Ascending aorta (tissue), 2 donors: ENCODE measurements at regions of chr18 and their contacts with region 1.

Region 1: GRCh38 chr18:32092422-32093101 is 888 bp downstream of the RNF138 start:
- DNase-seq: peak; percentile 92 to 99
- H3K4me3 ChIP-seq: peak overlapping the region; percentile 89 to 96
- H3K27ac ChIP-seq: peak overlapping the region; percentile 99 to 100
- H3K4me1 ChIP-seq: peaks cover 0 to 12% of the 10 kb centered on the region in 2 donors
- H3K27me3 ChIP-seq: no peaks in the 10 kb centered on the region
- CTCF ChIP-seq: no peak

Region 2: DNA sequence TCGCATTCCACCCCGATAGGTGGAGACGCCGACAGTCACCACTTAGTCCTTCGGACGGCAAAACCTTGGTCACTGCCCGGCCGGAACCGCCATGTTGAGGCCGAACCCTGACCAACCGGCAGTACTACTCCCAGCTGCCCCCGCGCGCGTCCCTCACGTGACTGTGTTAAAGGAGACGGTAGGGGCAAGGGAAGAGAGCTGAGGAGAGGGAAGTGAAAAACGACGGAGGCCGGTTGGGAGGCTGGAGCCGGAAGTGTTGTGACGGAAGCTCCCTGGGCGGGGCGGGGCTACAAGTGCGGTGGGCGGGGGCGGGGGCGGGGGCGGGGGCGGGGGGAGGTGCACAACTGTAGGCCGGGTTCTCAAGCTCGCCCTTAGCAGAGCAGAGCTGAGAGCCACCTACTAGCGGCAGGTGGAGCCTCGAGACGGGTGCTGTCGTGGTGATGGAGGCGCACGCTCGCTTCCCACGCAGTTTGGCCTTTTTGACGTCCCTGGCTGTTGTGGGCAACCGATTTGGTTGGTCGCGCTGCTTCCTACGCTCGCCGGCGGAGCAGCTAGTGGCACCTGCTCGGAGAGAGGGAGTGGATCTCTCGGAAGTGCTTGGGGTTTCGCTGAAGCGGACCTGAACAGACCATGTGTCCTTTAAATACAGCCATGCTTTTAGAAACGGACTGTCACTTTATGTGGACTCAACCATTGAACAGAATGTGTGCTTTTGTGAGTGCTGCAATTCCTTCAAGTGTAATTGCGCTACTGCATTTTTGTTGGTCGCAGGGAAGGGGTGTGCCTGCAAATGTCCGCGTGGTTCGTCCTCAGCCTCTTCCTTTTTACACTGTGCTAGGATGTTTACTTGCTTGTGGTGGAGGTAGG is 149.3 kb before region 1 on chr18 and contains the start of gene TRAPPC8:
- intact Hi-C with region 1: loop called (anchors 1 kb)
- DNase-seq: peak; percentile 94 to 99
- H3K4me3 ChIP-seq: peak within 1 kb of the TSS; percentile 87 to 95
- H3K27ac ChIP-seq: peak within 1 kb of the TSS; percentile 89 to 92
- H3K4me1 ChIP-seq: peaks cover 3 to 10% of the 10 kb centered on the region in 2 donors
- H3K27me3 ChIP-seq: no peaks in the 10 kb centered on the region
- CTCF ChIP-seq: peak in 1 of 3 experiments; percentile 32
- total RNA-seq, gene TRAPPC8: 6.8 TPM